PC-3 (cell line): ENCODE measurements at regions of chr7 and their contacts with region 1.

Region 1: DNA sequence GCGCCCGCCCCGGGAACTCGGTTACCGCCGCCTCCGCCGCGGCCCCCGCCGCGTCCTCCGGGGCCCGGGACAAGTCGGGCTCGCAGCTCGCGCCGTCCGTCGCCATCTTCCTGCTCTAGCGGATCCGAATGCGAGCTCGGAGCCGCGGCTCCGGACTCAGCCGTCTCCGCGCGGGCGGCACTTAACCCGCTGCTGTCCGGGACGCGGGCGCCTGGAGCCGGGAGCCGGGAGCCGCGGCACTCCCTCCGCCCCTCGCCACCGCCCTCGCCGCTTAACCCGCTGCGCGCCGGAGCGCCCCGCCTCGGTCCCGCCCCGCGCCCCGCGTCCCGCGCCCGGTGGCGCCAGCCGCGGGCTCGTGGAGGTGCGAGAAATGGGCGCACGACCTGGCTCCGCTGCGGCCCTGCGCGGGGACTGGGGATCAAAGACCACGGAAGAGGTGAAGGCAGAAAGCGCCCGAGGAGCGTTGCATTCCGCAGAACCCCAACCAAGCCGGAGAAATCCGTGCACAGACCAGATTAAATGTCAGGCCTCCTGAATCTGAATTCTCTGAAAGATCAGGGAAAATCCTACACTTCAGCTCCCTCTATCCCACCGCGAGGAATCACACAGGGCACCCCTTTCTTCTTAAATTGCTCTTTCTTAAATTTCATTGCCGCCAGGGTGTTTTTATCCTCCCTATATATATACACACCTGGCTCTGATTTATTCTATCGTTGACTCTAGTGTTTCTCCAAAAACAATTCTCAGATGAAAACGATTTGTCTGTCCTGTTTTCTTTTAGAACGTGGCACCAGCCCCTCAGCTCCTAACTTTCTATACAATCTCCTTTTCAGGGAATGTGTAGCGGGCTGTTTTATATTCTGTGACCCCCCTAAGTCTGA is at the start of gene CTTNBP2:
- DNase-seq: peak; percentile 28
- ATAC-seq: peak; percentile 69
- H3K4me3 ChIP-seq: peak within 1 kb of the TSS; percentile 71
- H3K27ac ChIP-seq: no peak within 1 kb of the TSS
- H3K4me1 ChIP-seq: 0 out of 2 replicates have a peak, but pooled peaks cover 6% of the 10 kb centered on the region
- H3K27me3 ChIP-seq: peaks cover 28% of the 10 kb centered on the region
- CTCF ChIP-seq: 0 out of 2 replicates have a peak, but pooled peaks have one; percentile 12
- total RNA-seq, gene CTTNBP2: 1.0 and 1.1 TPM in 2 replicates

Region 2: DNA sequence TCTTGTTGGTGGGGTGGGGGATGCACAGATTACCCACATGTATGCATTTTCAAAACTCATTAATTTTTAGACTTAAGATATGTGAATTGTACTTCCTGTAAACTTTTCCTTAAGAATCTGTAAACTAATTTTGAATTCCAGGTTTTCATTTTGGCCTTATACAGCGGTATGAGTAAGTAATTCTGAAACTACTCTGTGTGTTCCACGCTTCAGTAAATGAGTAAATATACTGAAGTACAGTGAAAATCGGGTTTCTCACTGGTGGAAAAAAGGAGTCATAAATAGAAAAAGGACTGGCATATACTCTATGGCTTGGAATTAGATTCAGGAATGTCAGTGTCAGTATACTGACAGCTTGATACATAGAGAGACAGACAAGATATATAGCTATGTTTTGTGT is 73.1 kb before region 1 on chr7:
- CTCF ChIA-PET with region 1: no interaction called
- POLR2A ChIA-PET with region 1: no interaction called
- intact Hi-C with region 1: loop called (anchors 1 kb)
- DNase-seq: peak; percentile 34
- ATAC-seq: peak; percentile 75
- H3K4me3 ChIP-seq: no peak overlapping the region
- H3K27ac ChIP-seq: no peak overlapping the region; the same call in 1 of the 2 replicates
- H3K4me1 ChIP-seq: no peaks in the 10 kb centered on the region
- H3K27me3 ChIP-seq: no peaks in the 10 kb centered on the region
- CTCF ChIP-seq: no peak

Region 3: DNA sequence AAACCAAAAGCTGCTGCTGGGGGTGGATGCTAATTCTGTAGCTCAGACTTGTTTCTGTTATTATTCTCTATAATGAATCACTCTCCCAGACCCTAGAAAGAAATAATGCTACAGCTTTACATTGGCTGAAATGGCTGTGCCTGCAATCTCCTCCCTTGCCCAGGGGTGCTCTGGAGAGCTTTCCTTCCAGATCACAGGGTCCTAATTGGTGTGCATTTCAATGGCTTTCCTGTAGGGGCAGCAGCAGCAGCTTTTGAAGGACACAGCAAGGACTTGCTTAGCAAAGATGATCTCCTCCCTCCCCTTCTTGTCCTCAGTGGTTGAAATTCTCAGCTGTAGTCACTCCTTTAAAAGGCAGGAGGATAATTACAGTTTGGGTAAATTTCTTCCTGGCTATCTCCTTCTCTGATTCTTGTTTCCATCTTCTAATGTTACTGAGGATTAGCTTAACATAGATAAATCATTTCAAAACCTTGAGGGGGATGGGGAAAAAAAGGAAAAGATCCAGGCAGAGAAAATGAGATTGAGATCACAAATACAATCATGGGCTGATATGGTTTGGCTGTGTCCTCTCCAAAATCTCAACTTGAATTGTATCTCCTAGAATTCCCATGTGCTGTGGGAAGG is 119.9 kb after region 1 on chr7:
- CTCF ChIA-PET with region 1: interaction called, 3 read pairs
- POLR2A ChIA-PET with region 1: no interaction called
- intact Hi-C with region 1: loop called (anchors 2 kb)
- DNase-seq: peak; percentile 65
- ATAC-seq: peak; percentile 48
- H3K4me3 ChIP-seq: no peak overlapping the region
- H3K27ac ChIP-seq: no peak overlapping the region
- H3K4me1 ChIP-seq: peaks cover 27% of the 10 kb centered on the region
- H3K27me3 ChIP-seq: no peaks in the 10 kb centered on the region
- CTCF ChIP-seq: peak; percentile 65; the same call in 1 of the 2 replicates

Region 4: DNA sequence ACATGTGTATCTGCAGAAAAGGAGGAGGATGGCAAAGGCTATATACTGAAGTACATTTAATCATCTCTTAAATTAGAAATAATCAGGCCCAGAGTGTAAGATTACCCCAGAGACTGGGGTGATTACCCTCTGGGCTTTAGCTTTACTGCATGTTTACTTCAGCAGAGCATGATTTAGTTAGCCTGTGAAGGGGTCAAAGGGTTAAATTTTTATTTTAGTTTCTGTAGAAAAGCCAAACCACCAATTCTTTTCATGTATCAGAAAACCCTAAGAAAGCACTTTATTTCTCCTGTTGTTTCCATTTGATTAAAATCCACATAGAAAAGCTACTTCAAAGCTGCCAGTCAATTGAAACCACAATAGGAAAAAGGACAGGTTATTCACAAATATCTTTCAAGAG is 209.0 kb after region 1 on chr7:
- CTCF ChIA-PET with region 1: no interaction called
- POLR2A ChIA-PET with region 1: no interaction called
- intact Hi-C with region 1: no loop called
- DNase-seq: no peak
- ATAC-seq: no peak
- H3K4me3 ChIP-seq: no peak overlapping the region
- H3K27ac ChIP-seq: no peak overlapping the region
- H3K4me1 ChIP-seq: no peaks in the 10 kb centered on the region; the same call in 1 of the 2 replicates
- H3K27me3 ChIP-seq: no peaks in the 10 kb centered on the region
- CTCF ChIP-seq: no peak

Region 5: GRCh38 chr7:118169146-118169545 is 295.6 kb after region 1 on chr7:
- CTCF ChIA-PET with region 1: interaction called, 10 read pairs
- POLR2A ChIA-PET with region 1: no interaction called
- intact Hi-C with region 1: no loop called
- DNase-seq: peak; percentile 4
- ATAC-seq: no peak
- H3K4me3 ChIP-seq: no peak overlapping the region
- H3K27ac ChIP-seq: no peak overlapping the region
- H3K4me1 ChIP-seq: no peaks in the 10 kb centered on the region
- H3K27me3 ChIP-seq: no peaks in the 10 kb centered on the region
- CTCF ChIP-seq: peak; percentile 33; the same call in 1 of the 2 replicates